ENCODE measurements at regions of chr9 and their contacts with region 1.

Region 1: DNA sequence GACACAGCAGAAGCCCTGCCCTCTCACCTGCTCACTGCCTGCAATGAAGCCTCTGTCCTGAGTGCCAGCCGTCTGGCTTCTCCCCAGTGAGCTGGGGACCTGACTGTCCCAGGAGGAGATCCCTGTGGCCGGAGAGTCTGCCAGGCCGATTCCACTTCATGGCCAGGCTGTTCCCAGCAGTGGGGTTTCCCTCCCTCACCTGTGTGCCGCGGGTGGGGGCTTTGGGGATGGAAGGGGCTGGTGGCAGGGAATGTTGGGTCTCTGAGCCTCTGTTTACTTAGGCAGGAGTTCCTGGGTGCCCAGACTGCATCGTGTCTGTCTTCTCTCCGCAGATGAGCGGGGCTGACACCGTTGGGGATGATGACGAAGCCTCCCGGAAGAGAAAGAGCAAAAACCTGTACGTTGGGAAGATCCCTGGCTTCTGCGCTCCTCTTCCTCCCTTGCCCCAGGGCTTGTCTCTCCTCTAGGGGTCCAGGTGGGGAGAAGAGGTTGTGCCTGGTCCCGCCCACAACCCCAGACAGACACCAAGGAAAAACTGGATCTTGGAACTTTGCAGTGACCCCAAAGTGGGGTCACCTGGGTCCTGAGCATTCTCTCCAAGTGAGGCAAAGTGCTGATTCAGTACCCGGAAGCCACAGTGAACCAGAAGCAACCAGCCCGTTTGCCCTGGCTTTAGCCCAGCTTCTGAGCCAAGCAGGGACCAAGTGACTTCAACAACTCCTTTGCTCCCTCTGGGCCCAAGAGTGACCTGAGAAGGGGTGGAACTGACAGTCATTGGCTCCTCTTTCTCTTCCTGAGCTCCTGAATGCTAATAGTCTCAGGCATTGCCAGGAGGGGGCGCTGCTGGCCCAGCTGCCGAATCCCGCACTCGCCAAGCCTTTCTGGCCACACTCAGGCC is 127.7 kb downstream of the RGS3 start:
- DNase-seq: peak; percentile 58
- H3K4me3 ChIP-seq: no peak overlapping the region
- H3K27ac ChIP-seq: no peak overlapping the region
- H3K4me1 ChIP-seq: peaks cover 13% of the 10 kb centered on the region
- H3K27me3 ChIP-seq: no peaks in the 10 kb centered on the region
- CTCF ChIP-seq: peak; percentile 84 to 91

Region 2: GRCh38 chr9:113309204-113309813 is 281.9 kb before region 1 on chr9:
- CTCF ChIA-PET with region 1: no interaction called
- dilution Hi-C with region 1: no loop called
- in situ Hi-C with region 1: no loop called
- intact Hi-C with region 1: loop called (anchors 2 kb)
- DNase-seq: peak; percentile 9
- H3K4me3 ChIP-seq: no peak overlapping the region
- H3K27ac ChIP-seq: no peak overlapping the region
- H3K4me1 ChIP-seq: no peaks in the 10 kb centered on the region
- H3K27me3 ChIP-seq: no peaks in the 10 kb centered on the region
- CTCF ChIP-seq: peak; percentile 75 to 78

Region 3: GRCh38 chr9:113446323-113446740 is 144.9 kb before region 1 on chr9:
- CTCF ChIA-PET with region 1: interaction called, 8 read pairs
- dilution Hi-C with region 1: no loop called
- in situ Hi-C with region 1: loop called (anchors 5 kb)
- intact Hi-C with region 1: loop called (anchors 1 kb)
- DNase-seq: peak; percentile 24
- H3K4me3 ChIP-seq: no peak overlapping the region
- H3K27ac ChIP-seq: no peak overlapping the region
- H3K4me1 ChIP-seq: no peaks in the 10 kb centered on the region
- H3K27me3 ChIP-seq: no peaks in the 10 kb centered on the region
- CTCF ChIP-seq: peak; percentile 34 to 55

Region 4: DNA sequence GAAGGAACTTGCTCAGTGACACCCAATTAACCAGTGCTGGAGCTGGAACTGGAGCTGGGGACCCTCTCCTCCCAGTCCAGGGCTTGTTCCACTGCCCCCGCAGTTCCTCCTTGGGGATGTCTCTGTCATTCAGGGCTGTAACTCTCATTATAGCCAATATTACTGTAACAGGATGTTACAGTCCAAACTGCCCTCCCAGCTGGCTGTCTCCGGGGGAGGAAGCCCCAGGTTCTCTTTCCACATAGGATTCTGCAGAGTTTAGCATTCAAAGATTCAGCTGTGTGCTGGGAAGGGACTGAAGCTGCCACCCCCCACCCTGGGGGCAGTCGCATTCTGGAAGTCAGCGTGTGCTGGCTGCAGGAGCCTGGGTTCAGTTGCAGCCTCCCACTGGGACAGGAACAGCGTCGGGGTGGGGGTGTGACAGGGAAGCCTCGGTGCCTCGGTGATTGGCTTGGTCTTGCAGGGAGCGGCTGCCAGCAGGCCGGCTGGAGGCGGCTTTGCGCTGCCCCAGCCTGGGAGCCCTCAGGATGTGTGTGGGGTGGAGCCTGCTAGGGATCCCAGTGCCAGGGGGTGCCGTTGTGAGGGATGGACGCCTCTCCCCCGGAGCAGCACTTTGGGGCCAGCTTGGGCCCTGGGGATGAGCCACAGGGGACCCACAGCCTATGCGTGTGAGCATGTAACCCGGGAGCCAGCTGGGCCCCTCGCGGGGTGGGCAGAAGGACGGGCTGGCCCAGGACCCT is 26.6 kb before region 1 on chr9:
- CTCF ChIA-PET with region 1: interaction called, 3 read pairs
- dilution Hi-C with region 1: no loop called
- in situ Hi-C with region 1: no loop called
- intact Hi-C with region 1: loop called (anchors 1 kb)
- DNase-seq: peak; percentile 85
- H3K4me3 ChIP-seq: peak overlapping the region; percentile 64 to 86 (median 65)
- H3K27ac ChIP-seq: peak overlapping the region; percentile 93
- H3K4me1 ChIP-seq: peaks cover 46% of the 10 kb centered on the region
- H3K27me3 ChIP-seq: no peaks in the 10 kb centered on the region
- CTCF ChIP-seq: no peak

Region 5: DNA sequence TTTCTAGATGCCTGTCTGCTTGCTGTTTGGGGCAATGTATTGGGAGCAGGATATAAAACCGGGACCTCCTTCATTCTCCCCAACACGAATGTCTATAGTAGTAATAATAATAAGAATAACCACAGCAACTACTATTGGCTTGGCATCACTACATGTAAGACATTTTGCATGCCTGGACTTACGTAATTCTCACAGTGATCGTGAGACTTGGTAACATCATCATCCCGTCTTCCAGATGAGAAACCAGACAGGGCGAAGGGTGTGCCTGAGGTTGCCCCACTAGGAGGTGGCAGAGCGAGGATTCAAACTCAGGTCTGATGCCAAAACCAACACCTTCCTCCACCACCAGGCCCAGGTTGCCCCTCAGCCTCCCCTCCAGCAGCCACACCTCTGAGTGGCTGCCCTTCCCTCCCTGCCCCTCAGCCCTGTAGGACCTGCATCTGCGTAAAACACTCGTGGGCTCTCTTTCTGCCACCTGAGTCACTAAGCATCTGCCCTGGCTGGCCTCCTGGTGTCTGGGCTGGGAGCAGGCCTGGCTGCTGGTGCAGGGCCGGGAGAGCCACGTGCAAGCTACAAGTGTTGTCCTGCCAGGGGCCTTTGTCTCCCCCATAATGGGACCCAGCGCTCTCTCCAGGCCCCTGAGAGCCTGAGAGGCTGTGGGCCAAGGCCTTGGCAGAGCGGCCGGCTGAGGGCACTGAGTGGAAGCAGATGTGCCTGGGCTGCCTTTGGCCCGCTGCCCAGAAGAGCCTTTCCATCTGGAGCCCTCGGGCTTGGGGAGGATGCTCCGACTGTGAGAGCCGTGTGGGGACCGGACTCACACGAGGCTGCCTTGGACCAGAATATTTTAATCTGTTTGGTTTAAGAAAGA is 57.6 kb after region 1 on chr9:
- CTCF ChIA-PET with region 1: no interaction called
- dilution Hi-C with region 1: loop called (anchors 5 kb)
- in situ Hi-C with region 1: loop called in 1 of 2 experiments (anchors 5 kb)
- intact Hi-C with region 1: no loop called
- DNase-seq: no peak
- H3K4me3 ChIP-seq: no peak overlapping the region
- H3K27ac ChIP-seq: no peak overlapping the region
- H3K4me1 ChIP-seq: peaks cover 6% of the 10 kb centered on the region
- H3K27me3 ChIP-seq: no peaks in the 10 kb centered on the region
- CTCF ChIP-seq: no peak